Esophagus squamous epithelium (tissue), 5 donors: ENCODE measurements at regions of chr16 and their contacts with region 1.

Region 1: DNA sequence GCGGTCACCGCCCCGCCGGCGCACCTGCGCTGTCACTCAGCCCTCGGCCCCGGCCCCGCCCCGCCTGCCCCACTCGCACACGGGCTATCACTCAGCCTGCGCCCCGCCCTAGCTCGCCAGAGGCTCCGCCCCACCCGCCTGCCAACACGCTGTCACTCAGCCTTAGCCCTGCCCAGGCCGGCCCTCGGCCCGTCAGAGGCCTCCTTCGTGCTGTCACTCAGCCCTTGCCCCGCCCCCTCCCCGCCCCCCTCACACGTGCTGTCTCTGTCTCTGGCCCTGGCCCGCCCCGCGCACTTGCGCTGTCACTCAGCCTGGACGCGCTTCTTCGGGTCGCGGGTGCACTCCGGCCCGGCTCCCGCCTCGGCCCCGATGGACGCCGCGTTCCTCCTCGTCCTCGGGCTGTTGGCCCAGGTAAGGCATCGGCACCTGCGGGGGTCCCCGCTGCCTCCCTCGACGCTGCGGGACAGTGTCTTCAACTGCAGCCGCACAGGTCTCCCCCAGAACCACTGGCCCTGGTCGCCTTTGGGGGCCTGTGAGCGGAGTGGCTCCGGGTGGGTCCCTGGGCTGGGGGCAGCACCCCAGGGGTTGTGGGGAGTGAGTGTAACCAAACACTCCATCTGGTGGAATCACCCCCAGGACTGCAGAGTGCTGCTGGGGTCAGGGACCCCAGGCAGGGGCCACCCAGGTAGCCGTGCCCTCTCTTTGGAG is at the start of gene CDH15:
- DNase-seq: peak; percentile 64
- H3K4me3 ChIP-seq: peak within 1 kb of the TSS in 3 of 4 donors; percentile 11 to 49 (median 34)
- H3K27ac ChIP-seq: peak within 1 kb of the TSS in 1 of 4 donors; percentile 5
- H3K4me1 ChIP-seq: peaks cover 20 to 34% (median 23%) of the 10 kb centered on the region in 3 donors
- H3K27me3 ChIP-seq: peaks cover 0 to 99% (median 15%) of the 10 kb centered on the region in 4 donors
- CTCF ChIP-seq: no peak
- POLR2A ChIP-seq: no peak
- total RNA-seq, gene CDH15: not detected

Region 2: DNA sequence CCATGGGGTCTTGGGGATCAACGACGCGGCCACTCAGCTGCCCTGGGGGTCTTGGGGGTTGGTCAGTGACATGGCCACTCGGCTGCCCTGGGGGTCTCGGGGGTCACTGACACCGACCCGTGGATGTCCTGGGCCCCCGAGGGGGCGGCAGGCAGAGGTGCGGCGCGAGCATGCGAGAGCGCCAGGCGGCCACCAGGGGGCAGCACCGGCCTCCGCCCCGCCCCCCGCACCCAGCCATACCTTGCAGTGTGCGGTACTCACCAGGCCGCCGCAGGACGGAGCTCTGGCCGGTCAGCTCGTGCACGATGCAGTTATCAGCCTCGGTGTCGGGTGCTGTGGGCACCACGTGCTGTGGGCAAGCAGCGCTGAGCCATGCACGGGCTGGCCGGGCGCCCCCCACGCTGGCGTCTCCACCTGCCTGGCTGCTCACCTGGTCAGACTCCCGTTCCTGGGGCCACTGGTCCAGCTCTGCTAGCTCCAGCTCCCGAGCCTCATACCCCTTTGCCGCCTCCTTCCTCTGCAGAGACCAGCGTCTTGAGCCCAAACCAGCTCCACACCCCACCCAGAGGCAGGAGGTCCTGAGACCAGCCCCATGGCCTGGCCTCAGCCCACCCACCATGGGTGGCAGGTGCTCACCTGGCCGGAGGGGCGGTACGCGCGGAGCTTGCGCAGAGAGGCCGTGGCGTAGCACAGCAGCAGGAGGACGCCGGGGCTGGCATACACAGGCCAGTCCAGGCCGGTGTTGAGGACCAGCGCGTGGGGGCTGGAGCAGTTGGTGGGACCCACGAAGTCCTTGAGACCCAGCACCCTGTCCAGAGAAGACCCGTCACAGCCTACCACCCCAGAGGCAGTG is 434.1 kb before region 1 on chr16:
- intact Hi-C with region 1: loop called (anchors 5 kb)
- DNase-seq: no peak
- H3K4me3 ChIP-seq: no peak overlapping the region
- H3K27ac ChIP-seq: peak overlapping the region in 1 of 4 donors; percentile 17
- H3K4me1 ChIP-seq: peaks cover 7 to 37% (median 19%) of the 10 kb centered on the region in 3 donors
- H3K27me3 ChIP-seq: no peaks in the 10 kb centered on the region
- CTCF ChIP-seq: peak; percentile 96 to 100 (median 100)
- POLR2A ChIP-seq: no peak

Region 3: GRCh38 chr16:88811769-88812512 is 359.7 kb before region 1 on chr16 and contains the start of gene APRT:
- intact Hi-C with region 1: loop called (anchors 10 kb)
- DNase-seq: peak; percentile 50
- H3K4me3 ChIP-seq: peak within 1 kb of the TSS; percentile 64 to 99 (median 74)
- H3K27ac ChIP-seq: peak within 1 kb of the TSS; percentile 92 to 98 (median 94)
- H3K4me1 ChIP-seq: peaks cover 34 to 66% (median 41%) of the 10 kb centered on the region in 3 donors
- H3K27me3 ChIP-seq: no peaks in the 10 kb centered on the region
- CTCF ChIP-seq: peak in 5 of 6 experiments; percentile 8 to 39 (median 15)
- POLR2A ChIP-seq: peak in 2 of 4 donors; percentile 15 to 82
- total RNA-seq, gene APRT: 186 to 314 (median 250) TPM

Region 4: GRCh38 chr16:88941913-88942909 is 229.4 kb before region 1 on chr16:
- intact Hi-C with region 1: loop called (anchors 5 kb)
- DNase-seq: no peak
- H3K4me3 ChIP-seq: peak overlapping the region in 3 of 4 donors; percentile 33 to 64 (median 57)
- H3K27ac ChIP-seq: no peak overlapping the region
- H3K4me1 ChIP-seq: peaks cover 36 to 53% (median 42%) of the 10 kb centered on the region in 3 donors
- H3K27me3 ChIP-seq: peaks cover 14 to 93% (median 17%) of the 10 kb centered on the region in 4 donors
- CTCF ChIP-seq: peak; percentile 30 to 63 (median 52)
- POLR2A ChIP-seq: no peak

Region 5: GRCh38 chr16:89222931-89223330 is 51.3 kb after region 1 on chr16:
- intact Hi-C with region 1: no loop called
- DNase-seq: no peak
- H3K4me3 ChIP-seq: no peak overlapping the region
- H3K27ac ChIP-seq: no peak overlapping the region
- H3K4me1 ChIP-seq: peaks cover 7 to 16% (median 15%) of the 10 kb centered on the region in 3 donors
- H3K27me3 ChIP-seq: no peaks in the 10 kb centered on the region
- CTCF ChIP-seq: no peak
- POLR2A ChIP-seq: no peak